HepG2 (cell line): ENCODE measurements at regions of chr19 and their contacts with region 1.

Region 1: DNA sequence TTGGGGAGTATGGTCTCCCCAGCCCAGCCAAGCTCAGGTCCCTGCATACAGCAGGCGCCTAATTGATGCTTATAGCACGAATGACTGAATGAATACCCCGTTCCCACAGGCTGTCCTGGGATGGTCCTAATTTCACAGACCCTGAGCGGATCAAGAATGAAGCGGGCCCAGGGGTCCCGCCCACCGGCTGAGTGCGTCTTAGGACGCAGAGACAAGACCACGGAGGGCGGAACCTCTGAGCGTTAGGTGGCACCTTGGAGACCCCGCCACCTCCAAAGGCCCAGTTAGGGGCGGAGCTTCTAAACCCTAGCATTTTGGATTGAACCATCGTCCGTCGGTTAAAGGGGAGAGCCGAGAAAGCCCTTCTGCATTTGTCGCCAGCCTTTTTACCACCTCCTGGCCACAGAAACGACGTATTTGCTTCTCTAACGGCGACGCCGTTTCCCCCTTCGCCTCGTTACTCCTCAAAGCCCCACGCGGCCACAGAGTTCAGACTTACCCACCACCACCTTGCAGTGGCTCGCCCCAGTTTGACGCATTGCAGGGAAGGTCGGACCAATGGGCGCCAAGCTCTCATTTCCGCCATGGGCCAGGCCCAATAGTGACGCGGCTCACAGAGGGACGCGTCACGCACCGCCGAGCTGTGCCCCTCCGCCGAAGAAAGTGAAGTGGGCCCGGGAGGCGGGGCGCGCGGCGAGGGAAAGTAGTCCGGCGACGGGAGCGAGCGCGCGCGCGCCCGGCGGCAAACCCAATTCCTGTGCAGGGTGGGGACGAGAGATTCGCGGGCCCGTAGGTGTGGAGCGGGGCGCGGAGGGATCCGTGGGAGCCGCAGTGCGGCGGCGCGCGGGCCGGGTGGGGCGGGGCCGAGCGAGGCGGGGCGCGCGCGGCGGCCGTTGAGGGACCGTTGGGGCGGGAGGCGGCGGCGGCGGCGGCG is 479 bp upstream of the CALM3 start:
- DNase-seq: peak; percentile 92
- ATAC-seq: peak; percentile 80
- H3K4me3 ChIP-seq: peak overlapping the region; percentile 62 to 98 (median 94)
- H3K27ac ChIP-seq: peak overlapping the region; percentile 98
- H3K4me1 ChIP-seq: peaks cover 38% of the 10 kb centered on the region
- H3K27me3 ChIP-seq: no peaks in the 10 kb centered on the region; a peak in 1 of 5 replicates
- CTCF ChIP-seq: no peak
- EP300 ChIP-seq: no peak
- POLR2A ChIP-seq: peak; percentile 82 to 86
- RAD21 ChIP-seq: peak; percentile 55

Region 2: DNA sequence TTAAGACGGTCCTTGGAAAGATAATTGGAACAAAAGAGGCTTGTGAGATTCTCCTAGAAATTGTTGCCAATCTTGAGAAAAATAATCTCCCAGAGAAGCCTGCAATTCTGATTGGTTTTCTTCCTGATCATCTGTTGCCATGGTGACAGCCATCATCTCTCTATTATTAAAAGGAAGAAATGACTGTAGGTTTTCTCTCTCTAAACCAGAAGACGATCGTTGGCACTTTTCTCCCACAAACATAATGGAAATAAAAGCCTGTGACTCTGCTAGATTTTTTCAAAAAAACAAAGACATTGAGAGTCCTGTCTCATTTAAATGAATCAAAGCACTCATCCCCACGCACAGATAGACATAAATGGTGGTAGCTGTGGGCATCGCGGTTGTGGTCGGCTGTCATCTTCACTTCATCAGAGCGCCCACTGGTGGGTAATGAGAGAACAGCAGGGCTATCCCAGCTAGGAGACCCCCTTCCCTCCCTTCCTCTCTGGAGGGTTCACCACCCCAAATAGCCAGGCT is 21.2 kb before region 1 on chr19:
- CTCF ChIA-PET with region 1: no interaction called
- POLR2A ChIA-PET with region 1: no interaction called
- in situ Hi-C with region 1: no loop called
- intact Hi-C with region 1: no loop called
- DNase-seq: no peak
- ATAC-seq: no peak
- H3K4me3 ChIP-seq: no peak overlapping the region
- H3K27ac ChIP-seq: no peak overlapping the region
- H3K4me1 ChIP-seq: peaks cover 3% of the 10 kb centered on the region
- H3K27me3 ChIP-seq: peaks cover 0 to 2% of the 10 kb centered on the region in 2 experiments; a peak in 1 of 5 replicates
- CTCF ChIP-seq: no peak
- EP300 ChIP-seq: no peak
- POLR2A ChIP-seq: no peak
- RAD21 ChIP-seq: no peak

Region 3: GRCh38 chr19:46614114-46614722 is 13.6 kb after region 1 on chr19:
- CTCF ChIA-PET with region 1: no interaction called
- POLR2A ChIA-PET with region 1: interaction called, 12 read pairs
- in situ Hi-C with region 1: no loop called
- intact Hi-C with region 1: loop called (anchors 1 kb)
- DNase-seq: peak; percentile 61
- ATAC-seq: peak; percentile 82
- H3K4me3 ChIP-seq: peak overlapping the region in 1 of 3 experiments; percentile 13; a peak in 1 of 6 replicates
- H3K27ac ChIP-seq: no peak overlapping the region
- H3K4me1 ChIP-seq: peaks cover 14% of the 10 kb centered on the region
- H3K27me3 ChIP-seq: peaks cover 0 to 13% of the 10 kb centered on the region in 2 experiments; a peak in 3 of 5 replicates
- CTCF ChIP-seq: peak; percentile 88
- EP300 ChIP-seq: no peak
- POLR2A ChIP-seq: no peak
- RAD21 ChIP-seq: peak; percentile 72

Region 4: DNA sequence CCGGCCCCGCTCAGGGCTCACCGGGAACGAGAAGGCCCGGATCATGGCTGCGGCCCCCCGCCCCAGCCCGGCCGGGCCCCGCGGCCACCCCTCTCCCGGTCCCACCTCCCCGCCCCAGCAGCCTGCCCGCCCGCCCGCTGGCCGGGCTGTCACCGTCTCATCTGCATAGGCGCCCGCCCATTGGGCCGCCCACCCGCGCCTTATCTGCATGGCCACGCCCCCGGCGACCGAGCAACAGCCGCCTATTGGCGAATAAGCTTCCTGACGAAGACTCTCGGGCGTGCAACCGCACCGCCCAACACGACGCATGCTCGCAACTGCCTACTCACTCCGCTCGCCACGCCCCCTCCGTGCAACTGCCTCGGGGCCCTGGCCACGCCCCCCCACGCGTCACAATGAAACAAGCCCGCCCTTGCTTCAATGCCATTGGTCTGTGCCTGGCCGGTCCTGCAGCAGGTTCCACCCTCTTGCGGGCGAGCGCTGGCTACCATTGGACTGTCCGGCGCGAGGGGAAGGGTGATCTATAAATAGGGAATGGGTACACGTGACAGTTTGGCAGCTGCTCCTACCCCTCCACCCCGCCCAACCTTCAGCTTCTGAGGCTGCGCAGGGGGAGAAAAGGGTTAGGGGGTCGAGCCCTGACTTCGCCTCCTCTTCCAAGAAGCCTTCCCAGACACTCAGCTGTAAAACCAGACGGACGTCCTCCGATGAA is 60.5 kb after region 1 on chr19 and contains the start of gene DACT3:
- CTCF ChIA-PET with region 1: no interaction called
- POLR2A ChIA-PET with region 1: interaction called, 16 read pairs
- in situ Hi-C with region 1: no loop called
- intact Hi-C with region 1: no loop called
- DNase-seq: peak; percentile 98
- ATAC-seq: peak; percentile 95
- H3K4me3 ChIP-seq: peak within 1 kb of the TSS; percentile 52 to 64 (median 54)
- H3K27ac ChIP-seq: no peak within 1 kb of the TSS
- H3K4me1 ChIP-seq: peaks cover 37% of the 10 kb centered on the region
- H3K27me3 ChIP-seq: peaks cover 4 to 23% of the 10 kb centered on the region in 2 experiments; a peak in 3 of 5 replicates
- CTCF ChIP-seq: peak; percentile 2; the same call in 1 of the 2 replicates
- EP300 ChIP-seq: no peak
- POLR2A ChIP-seq: no peak
- RAD21 ChIP-seq: no peak
- total RNA-seq, gene DACT3: 0.04 TPM in 1 of 2 replicates, not detected in the other